ENCODE measurements at regions of chr1 and their contacts with region 1.

Region 1: GRCh38 chr1:58783993-58784757 is at the start of gene JUN:
- DNase-seq: peak; percentile 99

Region 2: DNA sequence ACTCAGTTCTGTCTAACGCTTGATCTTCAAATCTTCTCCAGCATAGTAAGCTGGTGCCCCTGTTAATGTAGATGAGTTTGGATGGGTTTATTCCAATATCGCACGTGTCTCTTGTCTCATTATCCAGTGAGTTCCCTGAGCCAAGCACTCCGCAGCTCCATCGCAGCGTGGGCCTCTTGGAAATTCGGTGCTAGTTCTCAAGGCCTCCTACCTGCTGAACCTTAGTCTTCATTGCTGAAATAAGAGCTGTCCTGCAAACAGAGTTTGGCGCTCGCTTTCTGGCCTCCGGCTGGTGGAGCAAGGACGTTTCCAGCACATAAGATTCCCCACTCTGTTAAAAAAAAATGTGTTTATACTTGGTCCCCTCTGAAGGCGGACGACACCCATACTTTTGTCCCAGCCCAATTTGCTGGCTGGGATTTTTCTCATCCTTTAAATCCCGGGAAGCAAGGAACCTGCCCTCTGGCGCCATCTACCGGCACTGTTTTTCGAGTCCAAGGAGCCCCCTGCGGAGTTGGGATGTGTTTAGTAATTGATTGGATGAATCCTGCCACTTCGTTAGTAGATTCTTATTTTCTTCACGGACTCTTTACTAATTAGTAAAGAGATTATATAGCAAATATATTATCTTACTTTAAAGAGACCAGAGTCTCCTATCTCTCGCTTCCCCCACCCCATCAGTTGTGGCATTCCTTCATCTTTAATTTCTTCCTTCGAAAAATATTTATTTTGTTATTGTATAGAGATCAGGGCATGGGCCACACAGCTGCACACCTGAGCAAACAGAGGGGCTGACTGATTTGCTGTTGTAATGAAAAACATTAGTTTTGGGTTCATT is 15.0 kb before region 1 on chr1:
- CTCF ChIA-PET with region 1: interaction called, 5 read pairs
- POLR2A ChIA-PET with region 1: interaction called, 16 read pairs
- DNase-seq: peak; percentile 85

Region 3: GRCh38 chr1:58808077-58808476 is 23.9 kb after region 1 on chr1:
- CTCF ChIA-PET with region 1: no interaction called
- POLR2A ChIA-PET with region 1: interaction called, 10 read pairs
- DNase-seq: no peak

Region 4: GRCh38 chr1:58905628-58906256 is 121.6 kb after region 1 on chr1:
- CTCF ChIA-PET with region 1: no interaction called
- POLR2A ChIA-PET with region 1: interaction called, 14 read pairs
- DNase-seq: no peak

Region 5: DNA sequence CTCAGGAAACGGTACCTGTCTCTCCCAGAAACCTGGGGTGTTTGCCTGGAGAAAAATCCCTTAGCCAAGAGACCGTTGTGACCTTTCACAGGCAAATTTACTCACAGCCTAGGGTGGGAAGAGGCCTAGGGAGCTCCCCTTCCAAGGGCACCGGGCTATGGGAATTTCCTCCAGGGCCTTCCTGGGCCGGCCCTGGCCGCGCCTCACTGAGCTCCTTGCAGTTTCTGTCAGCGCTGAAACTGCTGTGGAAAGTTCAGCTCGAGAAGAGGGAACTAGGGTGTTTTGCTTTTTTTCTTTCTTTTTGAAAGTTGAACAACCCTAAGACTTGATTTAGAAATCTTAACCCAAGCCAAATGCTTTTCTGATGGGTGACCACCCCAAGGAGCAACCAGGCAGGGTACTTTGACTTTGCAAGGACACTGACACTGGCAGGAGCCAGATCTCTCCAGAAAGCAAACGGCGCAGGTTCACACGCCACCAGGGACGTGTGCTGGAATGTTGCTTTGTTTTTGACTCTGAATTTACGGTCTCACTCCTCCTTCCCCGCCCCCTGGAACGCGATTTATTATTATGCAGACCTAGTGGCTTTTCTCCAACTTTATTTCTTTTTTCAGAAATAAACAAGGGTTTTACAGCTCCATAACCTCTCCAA is 229.2 kb after region 1 on chr1:
- CTCF ChIA-PET with region 1: interaction called, 3 read pairs
- POLR2A ChIA-PET with region 1: interaction called, 20 read pairs
- DNase-seq: peak; percentile 78

Measured in HEK293T (cell line).